ENCODE measurements at regions of chr1 and their contacts with region 1.

Region 1: GRCh38 chr1:163174524-163175437 is 27.9 kb downstream of the RGS5 start:
- DNase-seq: peak; percentile 58 to 75
- ATAC-seq: peak; percentile 56 to 84 (median 64)
- H3K4me3 ChIP-seq: peak overlapping the region; percentile 16
- H3K27ac ChIP-seq: no peak overlapping the region
- H3K4me1 ChIP-seq: no peaks in the 10 kb centered on the region
- H3K27me3 ChIP-seq: no peaks in the 10 kb centered on the region
- CTCF ChIP-seq: peak; percentile 84

Region 2: DNA sequence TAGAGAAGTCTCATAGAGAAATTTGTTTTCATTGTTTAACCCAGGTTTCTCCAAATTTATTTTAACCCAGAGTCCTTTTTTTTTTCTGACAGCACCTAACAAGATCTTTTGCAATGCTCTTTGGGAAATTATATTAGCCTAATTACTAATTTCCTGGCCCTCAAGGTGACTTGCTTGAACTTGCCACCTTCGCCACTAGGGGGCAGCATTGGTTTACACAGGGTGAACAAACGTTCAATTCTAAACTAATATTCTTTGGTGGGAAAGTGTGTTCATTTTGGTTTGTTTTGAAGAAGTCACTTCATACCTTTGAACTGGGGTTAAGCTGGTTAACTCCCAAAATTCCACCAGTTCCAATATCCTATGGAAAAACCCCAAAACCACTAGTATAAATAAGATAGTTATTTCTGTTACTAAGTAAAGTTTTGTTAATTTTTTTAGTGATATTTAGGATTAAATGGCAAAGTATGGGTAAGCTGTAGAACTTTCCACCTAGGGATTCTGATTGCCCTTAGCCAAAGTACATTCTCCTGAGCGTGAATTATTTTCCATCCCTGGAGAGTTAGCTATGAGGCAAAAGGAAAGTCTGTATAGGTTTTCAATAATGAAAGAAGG is 326.8 kb before region 1 on chr1:
- intact Hi-C with region 1: loop called in 1 of 2 experiments (anchors 5 kb)
- DNase-seq: peak; percentile 73 to 84
- ATAC-seq: peak in 2 of 4 donors; percentile 54 to 76
- H3K4me3 ChIP-seq: no peak overlapping the region
- H3K27ac ChIP-seq: no peak overlapping the region
- H3K4me1 ChIP-seq: no peaks in the 10 kb centered on the region
- H3K27me3 ChIP-seq: no peaks in the 10 kb centered on the region
- CTCF ChIP-seq: peak; percentile 94

Region 3: GRCh38 chr1:162854245-162854882 is 320.4 kb before region 1 on chr1:
- intact Hi-C with region 1: loop called (anchors 5 kb)
- DNase-seq: peak; percentile 24 to 56
- ATAC-seq: peak in 3 of 4 donors; percentile 46 to 77 (median 68)
- H3K4me3 ChIP-seq: no peak overlapping the region
- H3K27ac ChIP-seq: no peak overlapping the region
- H3K4me1 ChIP-seq: no peaks in the 10 kb centered on the region
- H3K27me3 ChIP-seq: no peaks in the 10 kb centered on the region
- CTCF ChIP-seq: peak; percentile 75

Region 4: GRCh38 chr1:162878000-162878596 is 296.7 kb before region 1 on chr1:
- intact Hi-C with region 1: loop called (anchors 1 to 2 kb)
- DNase-seq: peak; percentile 33 to 61
- ATAC-seq: peak; percentile 79 to 88 (median 84)
- H3K4me3 ChIP-seq: no peak overlapping the region
- H3K27ac ChIP-seq: no peak overlapping the region
- H3K4me1 ChIP-seq: peaks cover 12% of the 10 kb centered on the region
- H3K27me3 ChIP-seq: no peaks in the 10 kb centered on the region
- CTCF ChIP-seq: peak; percentile 84

Region 5: DNA sequence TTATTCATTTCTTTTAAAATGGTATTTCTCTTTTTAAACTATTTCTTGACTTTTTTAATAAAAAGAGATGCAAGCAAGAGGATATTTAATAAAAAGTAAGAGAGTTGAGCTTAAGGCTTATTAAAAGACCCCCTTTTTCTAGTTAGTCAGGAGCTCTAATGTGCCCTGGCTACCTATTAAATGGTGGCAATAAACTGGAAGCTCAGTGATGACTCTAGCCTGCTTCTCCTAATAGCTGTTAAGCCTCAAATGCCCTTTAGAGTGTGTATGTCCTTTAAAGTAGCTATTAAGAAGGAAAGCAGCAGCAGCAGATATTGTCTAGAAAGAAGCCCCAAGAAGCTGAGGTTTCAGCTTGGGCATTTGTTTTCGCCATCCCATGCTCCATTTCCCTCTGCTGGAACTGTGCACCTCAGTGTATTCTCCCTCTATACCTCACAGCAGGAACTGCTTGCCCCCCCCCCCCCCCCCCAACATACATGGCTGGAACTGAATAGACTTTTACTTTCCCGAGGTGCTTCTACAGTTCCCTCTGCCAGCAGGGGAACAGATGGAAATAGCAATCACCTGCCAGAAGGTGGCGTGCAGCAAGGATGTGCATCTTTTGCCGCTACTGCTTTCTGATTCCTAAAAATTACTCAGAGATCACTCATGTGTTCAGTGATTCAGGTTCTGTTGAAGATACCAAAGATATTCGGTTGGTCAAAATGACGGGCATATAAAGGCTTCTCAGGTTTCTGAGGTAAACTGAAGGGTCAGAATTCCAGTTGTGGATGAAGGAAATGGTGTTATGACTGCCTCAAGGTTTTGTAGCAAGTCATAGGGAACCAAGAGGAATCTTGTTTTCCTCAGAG is 103.2 kb before region 1 on chr1:
- intact Hi-C with region 1: loop called (anchors 5 to 10 kb)
- DNase-seq: peak; percentile 37 to 54
- ATAC-seq: peak; percentile 40 to 70 (median 60)
- H3K4me3 ChIP-seq: no peak overlapping the region
- H3K27ac ChIP-seq: no peak overlapping the region
- H3K4me1 ChIP-seq: peaks cover 11% of the 10 kb centered on the region
- H3K27me3 ChIP-seq: no peaks in the 10 kb centered on the region
- CTCF ChIP-seq: peak; percentile 59

Region 6: GRCh38 chr1:163248064-163248463 is 73.3 kb after region 1 on chr1:
- intact Hi-C with region 1: no loop called
- DNase-seq: no peak
- ATAC-seq: no peak
- H3K4me3 ChIP-seq: no peak overlapping the region
- H3K27ac ChIP-seq: no peak overlapping the region
- H3K4me1 ChIP-seq: no peaks in the 10 kb centered on the region
- H3K27me3 ChIP-seq: no peaks in the 10 kb centered on the region
- CTCF ChIP-seq: no peak

Region 7: DNA sequence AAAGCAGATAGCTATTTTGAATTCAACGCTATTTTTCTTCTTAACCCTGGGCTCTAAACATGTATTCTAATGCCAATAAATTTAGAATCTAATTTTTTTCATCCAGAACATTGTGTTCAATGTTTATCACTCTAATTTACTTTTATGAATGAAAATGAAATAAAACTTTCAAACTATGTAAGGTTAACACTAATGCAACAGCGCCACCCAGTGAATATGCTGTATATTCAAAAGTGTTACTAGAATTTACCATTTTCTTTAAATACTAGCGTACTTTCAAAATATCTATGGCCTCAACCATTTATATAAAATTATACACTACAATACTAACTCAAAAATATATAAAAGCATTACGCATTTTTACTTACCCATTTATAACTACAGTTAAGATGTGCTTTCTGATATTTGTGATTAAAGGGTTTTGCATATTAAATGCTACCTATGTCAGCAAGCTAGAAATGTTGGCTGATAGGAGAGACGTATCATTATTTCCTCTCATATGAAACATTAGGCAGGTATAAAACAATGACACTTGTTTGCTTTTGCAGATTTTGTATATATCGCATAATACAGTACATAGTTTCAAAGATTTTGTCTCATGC is 141.1 kb after region 1 on chr1:
- intact Hi-C with region 1: loop called in 1 of 2 experiments (anchors 5 kb)
- DNase-seq: no peak
- ATAC-seq: no peak
- H3K4me3 ChIP-seq: no peak overlapping the region
- H3K27ac ChIP-seq: no peak overlapping the region
- H3K4me1 ChIP-seq: peaks cover 8% of the 10 kb centered on the region
- H3K27me3 ChIP-seq: no peaks in the 10 kb centered on the region
- CTCF ChIP-seq: peak; percentile 70

Measured in psoas muscle (tissue), 8 donors.